Activated CD4-positive, alpha-beta T cell treated with anti-CD3 and anti-CD28 coated beads, Interleukin-2, amount 10 ng/mL, durations not matched to agents 7 days and 5 days (primary cell): ENCODE measurements at regions of chr11 and their contacts with region 1.

Region 1: GRCh38 chr11:96279018-96279895 is 63.7 kb downstream of the MAML2 start:
- DNase-seq: no peak
- H3K4me3 Mint-ChIP-seq: no peak overlapping the region
- H3K27ac Mint-ChIP-seq: no peak overlapping the region
- H3K4me1 Mint-ChIP-seq: peaks cover 50% of the 10 kb centered on the region
- H3K27me3 Mint-ChIP-seq: no peaks in the 10 kb centered on the region

Region 2: GRCh38 chr11:96263361-96263763 is 15.9 kb before region 1 on chr11:
- CTCF ChIA-PET with region 1: interaction called, 12 read pairs
- POLR2A ChIA-PET with region 1: no interaction called
- DNase-seq: no peak
- H3K4me3 Mint-ChIP-seq: no peak overlapping the region
- H3K27ac Mint-ChIP-seq: no peak overlapping the region
- H3K4me1 Mint-ChIP-seq: peaks cover 87% of the 10 kb centered on the region
- H3K27me3 Mint-ChIP-seq: no peaks in the 10 kb centered on the region